ENCODE measurements at regions of chr15 and their contacts with region 1.

Region 1: DNA sequence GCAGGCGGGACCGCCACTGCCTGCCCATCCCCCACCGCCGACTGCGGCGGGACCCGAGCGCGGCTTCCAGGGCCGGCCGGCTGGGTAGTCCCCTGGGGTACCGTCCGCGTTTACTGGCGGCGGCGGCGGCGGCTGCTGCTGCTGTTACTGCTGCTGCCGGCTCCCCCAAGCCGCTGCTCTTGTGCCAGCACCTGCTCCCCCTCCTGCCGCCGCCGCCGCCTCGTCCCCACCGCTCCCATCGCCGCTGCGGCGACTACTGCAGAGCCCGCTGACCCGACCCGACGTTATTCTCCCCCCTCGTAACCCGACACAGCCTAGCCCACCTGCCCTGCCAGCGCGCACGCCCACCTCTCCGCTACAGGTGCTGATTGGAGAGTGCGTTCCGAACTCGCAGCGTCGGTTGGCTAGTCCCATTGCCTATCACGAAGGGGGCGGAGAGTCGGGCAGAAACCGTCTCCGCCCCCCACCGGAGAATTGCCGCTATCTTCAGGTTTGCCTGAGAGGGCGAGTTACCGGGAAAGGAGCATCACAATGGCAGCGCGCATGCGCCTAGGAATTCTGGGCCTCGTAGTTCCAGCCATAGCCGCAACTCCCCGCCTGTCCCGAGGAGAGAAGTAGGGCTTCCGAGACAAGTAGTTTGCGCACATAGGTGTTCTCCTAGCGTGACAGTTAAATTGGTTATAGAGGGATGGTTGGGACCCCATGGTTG is at the start of gene TTBK2:
- DNase-seq: peak; percentile 99
- H3K4me3 ChIP-seq: peak within 1 kb of the TSS; percentile 74
- H3K27ac ChIP-seq: peak within 1 kb of the TSS; percentile 15
- H3K4me1 ChIP-seq: peaks cover 32% of the 10 kb centered on the region
- CTCF ChIP-seq: no peak
- total RNA-seq, gene TTBK2: 14.2 and 19.2 TPM in 2 replicates

Region 2: GRCh38 chr15:42575188-42576039 is 345.3 kb before region 1 on chr15 and contains the start of gene STARD9:
- CTCF ChIA-PET with region 1: no interaction called
- POLR2A ChIA-PET with region 1: interaction called, 3 read pairs
- intact Hi-C with region 1: loop called (anchors 5 kb)
- DNase-seq: peak; percentile 96
- H3K4me3 ChIP-seq: peak within 1 kb of the TSS; percentile 79
- H3K27ac ChIP-seq: peak within 1 kb of the TSS; percentile 1
- H3K4me1 ChIP-seq: peaks cover 33% of the 10 kb centered on the region
- CTCF ChIP-seq: no peak
- total RNA-seq, gene STARD9: 15.3 and 15.4 TPM in 2 replicates

Region 3: GRCh38 chr15:42736793-42737528 is 183.7 kb before region 1 on chr15 and contains the start of gene CDAN1:
- CTCF ChIA-PET with region 1: no interaction called
- POLR2A ChIA-PET with region 1: no interaction called
- intact Hi-C with region 1: loop called (anchors 10 kb)
- DNase-seq: peak; percentile 88
- H3K4me3 ChIP-seq: peak within 1 kb of the TSS; percentile 83
- H3K27ac ChIP-seq: peak within 1 kb of the TSS; percentile 49
- H3K4me1 ChIP-seq: peaks cover 33% of the 10 kb centered on the region
- CTCF ChIP-seq: no peak
- total RNA-seq, gene CDAN1: 26.1 and 28.9 TPM in 2 replicates

Region 4: GRCh38 chr15:42939841-42940240 is 19.2 kb after region 1 on chr15:
- CTCF ChIA-PET with region 1: no interaction called
- POLR2A ChIA-PET with region 1: no interaction called
- intact Hi-C with region 1: no loop called
- DNase-seq: no peak
- H3K4me3 ChIP-seq: no peak overlapping the region
- H3K27ac ChIP-seq: no peak overlapping the region
- H3K4me1 ChIP-seq: no peaks in the 10 kb centered on the region
- CTCF ChIP-seq: no peak